WTC11 (cell line): ENCODE measurements at regions of chr7 and their contacts with region 1.

Region 1: GRCh38 chr7:150368096-150368883 is at the start of gene REPIN1:
- DNase-seq: peak; percentile 86
- ATAC-seq: peak; percentile 55
- H3K4me3 Mint-ChIP-seq: peak within 1 kb of the TSS; percentile 91
- H3K27ac Mint-ChIP-seq: peak within 1 kb of the TSS; percentile 99
- H3K4me1 Mint-ChIP-seq: peaks cover 52% of the 10 kb centered on the region
- H3K27me3 Mint-ChIP-seq: no peaks in the 10 kb centered on the region
- CTCF ChIP-seq: no peak
- total RNA-seq, gene REPIN1: 105 to 130 TPM (median 112 TPM) in 3 replicates

Region 2: GRCh38 chr7:150378853-150379440 is 10.7 kb after region 1 on chr7 and contains the start of gene ZNF775:
- CTCF ChIA-PET with region 1: interaction called, 16 read pairs
- POLR2A ChIA-PET with region 1: interaction called, 27 read pairs
- DNase-seq: peak; percentile 96
- ATAC-seq: peak; percentile 72
- H3K4me3 Mint-ChIP-seq: peak within 1 kb of the TSS; percentile 87
- H3K27ac Mint-ChIP-seq: peak within 1 kb of the TSS; percentile 95
- H3K4me1 Mint-ChIP-seq: peaks cover 81% of the 10 kb centered on the region
- H3K27me3 Mint-ChIP-seq: no peaks in the 10 kb centered on the region
- CTCF ChIP-seq: no peak
- total RNA-seq, gene ZNF775: 24.1 to 26.6 TPM (median 25.4 TPM) in 3 replicates

Region 3: GRCh38 chr7:150685219-150686029 is 317.1 kb after region 1 on chr7 and contains the start of gene GIMAP2:
- CTCF ChIA-PET with region 1: no interaction called
- POLR2A ChIA-PET with region 1: no interaction called
- DNase-seq: no peak
- ATAC-seq: no peak
- H3K4me3 Mint-ChIP-seq: no peak within 1 kb of the TSS
- H3K27ac Mint-ChIP-seq: no peak within 1 kb of the TSS
- H3K4me1 Mint-ChIP-seq: peaks cover 7% of the 10 kb centered on the region
- H3K27me3 Mint-ChIP-seq: peaks cover 87% of the 10 kb centered on the region
- CTCF ChIP-seq: no peak
- total RNA-seq, gene GIMAP2: 0.15 to 0.37 TPM (median 0.18 TPM) in 3 replicates